ENCODE measurements at regions of chr5 and their contacts with region 1.

Region 1: GRCh38 chr5:173412566-173412965 is 84.4 kb upstream of the STC2 start:
- DNase-seq: no peak
- ATAC-seq: peak; percentile 30

Region 2: GRCh38 chr5:172849606-172850453 is 562.7 kb before region 1 on chr5:
- intact Hi-C with region 1: loop called (anchors 5 kb)
- DNase-seq: no peak
- ATAC-seq: no peak

Measured in sciatic nerve (tissue), 2 donors.